Left ventricle myocardium inferior (tissue), 1 donor: ENCODE measurements at regions of chr7 and their contacts with region 1.

Region 1: DNA sequence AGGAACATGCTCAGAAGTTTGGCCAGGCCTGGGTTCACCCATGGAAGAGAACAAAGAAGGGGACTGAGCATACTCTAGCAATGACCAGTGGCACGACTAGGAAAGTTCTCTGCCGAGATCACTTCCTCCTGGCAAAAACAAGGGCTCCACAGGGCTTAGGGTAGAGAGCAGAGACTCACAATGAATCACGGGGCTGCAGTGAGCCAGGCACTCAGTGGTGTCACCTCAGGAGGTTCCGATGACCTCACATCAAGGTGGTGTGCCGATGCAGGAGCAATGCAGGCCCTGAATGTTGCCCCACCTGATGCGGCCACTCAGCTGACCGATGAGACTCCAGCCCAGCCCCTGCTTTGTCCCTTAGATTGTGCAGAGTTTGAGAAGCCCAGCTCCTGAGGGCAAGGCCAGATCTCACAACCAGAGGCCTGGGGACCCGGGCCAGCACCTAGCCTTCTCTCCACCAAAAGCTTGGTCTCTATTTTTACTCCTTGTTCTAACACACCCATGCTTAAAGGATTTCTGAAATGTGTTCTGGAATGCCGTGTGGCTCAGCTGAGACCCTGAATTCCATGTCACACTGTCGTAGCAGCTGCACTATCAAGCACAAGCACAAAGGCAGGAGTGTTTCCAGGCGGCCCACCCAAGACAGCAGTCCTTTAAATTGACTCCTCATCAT is 60.9 kb downstream of the COBL start:
- DNase-seq: no peak
- H3K4me3 ChIP-seq: no peak overlapping the region
- H3K27ac ChIP-seq: peak overlapping the region; percentile 65
- H3K4me1 ChIP-seq: peaks cover 45% of the 10 kb centered on the region
- H3K27me3 ChIP-seq: no peaks in the 10 kb centered on the region
- CTCF ChIP-seq: no peak

Region 2: GRCh38 chr7:50795831-50796230 is 459.8 kb before region 1 on chr7:
- intact Hi-C with region 1: no loop called
- DNase-seq: no peak
- H3K4me3 ChIP-seq: no peak overlapping the region
- H3K27ac ChIP-seq: no peak overlapping the region
- H3K4me1 ChIP-seq: peaks cover 21% of the 10 kb centered on the region
- H3K27me3 ChIP-seq: no peaks in the 10 kb centered on the region
- CTCF ChIP-seq: peak; percentile 27

Region 3: GRCh38 chr7:51366930-51367613 is 111.4 kb after region 1 on chr7:
- intact Hi-C with region 1: loop called (anchors 10 kb)
- DNase-seq: no peak
- H3K4me3 ChIP-seq: no peak overlapping the region
- H3K27ac ChIP-seq: no peak overlapping the region
- H3K4me1 ChIP-seq: peaks cover 4% of the 10 kb centered on the region
- H3K27me3 ChIP-seq: no peaks in the 10 kb centered on the region
- CTCF ChIP-seq: peak; percentile 76